Heart right ventricle (tissue), 16 donors: ENCODE measurements at regions of chr5 and their contacts with region 1.

Region 1: GRCh38 chr5:32109236-32109635 is 64.9 kb downstream of the GOLPH3 start:
- DNase-seq: no peak
- ATAC-seq: peak in 1 of 8 donors; percentile 41
- H3K4me3 ChIP-seq: no peak overlapping the region
- H3K27ac ChIP-seq: no peak overlapping the region
- H3K4me1 ChIP-seq: no peaks in the 10 kb centered on the region
- H3K27me3 ChIP-seq: no peaks in the 10 kb centered on the region
- CTCF ChIP-seq: no peak

Region 2: DNA sequence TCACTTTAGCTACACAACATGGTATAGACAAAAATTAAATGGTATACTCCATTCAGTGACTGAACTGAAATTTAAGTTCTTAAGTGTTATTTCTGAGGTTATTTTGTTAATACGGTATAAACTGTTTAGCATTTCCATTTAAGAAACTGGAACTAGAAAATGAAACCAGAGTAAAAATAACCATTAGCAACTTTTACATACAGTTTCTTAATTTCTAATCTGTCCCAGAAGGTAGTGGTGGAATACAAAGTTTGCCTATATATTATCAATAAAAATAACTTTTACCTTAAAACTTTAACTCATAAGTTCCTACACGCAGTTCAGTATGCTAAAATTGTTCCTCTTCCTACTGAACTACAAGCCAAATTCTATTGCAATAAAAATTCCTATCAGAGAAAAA is 54.5 kb after region 1 on chr5:
- intact Hi-C with region 1: loop called in 1 of 10 experiments (anchors 2 kb)
- DNase-seq: no peak
- ATAC-seq: no peak
- H3K4me3 ChIP-seq: no peak overlapping the region
- H3K27ac ChIP-seq: peak overlapping the region in 2 of 10 donors; percentile 0 to 13
- H3K4me1 ChIP-seq: peaks cover 10 to 78% (median 69%) of the 10 kb centered on the region in 9 donors
- H3K27me3 ChIP-seq: no peaks in the 10 kb centered on the region
- CTCF ChIP-seq: no peak